HCT116 (cell line): ENCODE measurements at regions of chr11 and their contacts with region 1.

Region 1: DNA sequence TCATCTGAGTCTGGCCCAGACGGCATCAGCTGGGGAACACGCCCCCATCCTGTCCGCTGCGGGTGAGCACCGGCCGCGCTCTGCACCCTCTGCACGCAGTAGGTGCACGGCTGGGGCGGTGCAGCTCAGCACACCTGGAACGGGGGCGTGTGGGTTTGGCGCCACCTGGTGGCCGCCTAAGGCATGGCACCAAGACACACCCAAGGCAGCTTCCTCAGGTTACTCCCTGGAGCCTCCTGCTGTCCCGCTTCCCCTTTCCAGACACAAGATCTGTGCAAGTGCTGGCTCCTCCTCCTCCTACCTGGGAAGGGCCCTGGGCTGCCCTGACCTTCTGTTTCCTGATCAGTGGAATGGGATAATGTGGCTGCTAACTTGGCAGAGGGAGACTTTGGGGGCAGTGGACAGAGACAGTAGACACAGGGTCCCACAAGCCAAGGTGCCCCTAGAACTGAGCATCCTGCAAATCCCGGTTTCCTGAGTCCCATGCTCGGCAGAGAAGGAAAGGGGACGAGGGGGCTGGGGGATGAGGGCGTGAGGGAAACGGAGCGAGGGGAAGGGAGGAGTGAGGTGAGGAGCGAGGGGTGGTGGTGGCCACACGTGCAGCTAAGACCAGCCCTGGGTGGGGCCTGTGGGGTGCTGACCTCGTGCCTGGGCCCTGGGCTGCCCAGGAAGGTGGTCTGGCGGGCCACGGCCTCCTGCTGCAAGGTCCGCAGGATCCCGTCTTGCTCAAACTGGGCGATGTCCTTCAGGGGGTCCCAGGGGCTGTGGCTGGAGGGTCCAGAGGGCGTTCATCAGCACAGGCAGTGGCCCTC is 34.8 kb upstream of the CARS1 start:
- DNase-seq: peak; percentile 67
- ATAC-seq: peak; percentile 94
- H3K4me3 ChIP-seq: no peak overlapping the region
- H3K27ac ChIP-seq: peak overlapping the region; percentile 36; the same call in 1 of the 2 replicates
- H3K4me1 ChIP-seq: peaks cover 2 to 22% of the 10 kb centered on the region in 2 experiments
- H3K27me3 ChIP-seq: no peaks in the 10 kb centered on the region
- CTCF ChIP-seq: peak; percentile 98 to 99 (median 98)
- POLR2A ChIP-seq: no peak
- RAD21 ChIP-seq: peak; percentile 96

Region 2: DNA sequence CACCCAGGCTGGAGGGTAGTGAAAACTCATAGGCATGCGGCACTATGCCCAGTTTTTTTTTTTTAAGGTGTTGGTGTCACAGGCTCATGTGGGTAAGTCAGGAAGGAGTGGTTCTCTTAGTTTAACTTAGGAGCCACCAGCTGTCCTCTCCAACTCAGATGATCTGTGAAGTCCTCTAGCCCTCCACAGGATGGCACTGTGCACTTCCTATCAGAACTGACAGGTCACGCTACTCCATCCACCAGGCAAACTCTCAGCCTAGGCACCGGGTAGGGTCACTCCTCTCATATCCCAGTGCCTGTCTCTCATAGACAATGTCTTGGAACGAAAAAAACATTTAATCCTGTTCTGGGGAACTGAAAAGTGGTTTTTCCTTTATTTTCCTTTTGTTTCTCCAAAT is 116.4 kb before region 1 on chr11:
- CTCF ChIA-PET with region 1: interaction called, 5 read pairs
- POLR2A ChIA-PET with region 1: no interaction called
- RAD21 ChIA-PET with region 1: no interaction called
- intact Hi-C with region 1: loop called (anchors 2 kb)
- DNase-seq: peak; percentile 36
- ATAC-seq: peak; percentile 96
- H3K4me3 ChIP-seq: no peak overlapping the region
- H3K27ac ChIP-seq: no peak overlapping the region
- H3K4me1 ChIP-seq: no peaks in the 10 kb centered on the region
- H3K27me3 ChIP-seq: no peaks in the 10 kb centered on the region
- CTCF ChIP-seq: peak; percentile 55 to 62 (median 59)
- POLR2A ChIP-seq: no peak
- RAD21 ChIP-seq: peak; percentile 51

Region 3: DNA sequence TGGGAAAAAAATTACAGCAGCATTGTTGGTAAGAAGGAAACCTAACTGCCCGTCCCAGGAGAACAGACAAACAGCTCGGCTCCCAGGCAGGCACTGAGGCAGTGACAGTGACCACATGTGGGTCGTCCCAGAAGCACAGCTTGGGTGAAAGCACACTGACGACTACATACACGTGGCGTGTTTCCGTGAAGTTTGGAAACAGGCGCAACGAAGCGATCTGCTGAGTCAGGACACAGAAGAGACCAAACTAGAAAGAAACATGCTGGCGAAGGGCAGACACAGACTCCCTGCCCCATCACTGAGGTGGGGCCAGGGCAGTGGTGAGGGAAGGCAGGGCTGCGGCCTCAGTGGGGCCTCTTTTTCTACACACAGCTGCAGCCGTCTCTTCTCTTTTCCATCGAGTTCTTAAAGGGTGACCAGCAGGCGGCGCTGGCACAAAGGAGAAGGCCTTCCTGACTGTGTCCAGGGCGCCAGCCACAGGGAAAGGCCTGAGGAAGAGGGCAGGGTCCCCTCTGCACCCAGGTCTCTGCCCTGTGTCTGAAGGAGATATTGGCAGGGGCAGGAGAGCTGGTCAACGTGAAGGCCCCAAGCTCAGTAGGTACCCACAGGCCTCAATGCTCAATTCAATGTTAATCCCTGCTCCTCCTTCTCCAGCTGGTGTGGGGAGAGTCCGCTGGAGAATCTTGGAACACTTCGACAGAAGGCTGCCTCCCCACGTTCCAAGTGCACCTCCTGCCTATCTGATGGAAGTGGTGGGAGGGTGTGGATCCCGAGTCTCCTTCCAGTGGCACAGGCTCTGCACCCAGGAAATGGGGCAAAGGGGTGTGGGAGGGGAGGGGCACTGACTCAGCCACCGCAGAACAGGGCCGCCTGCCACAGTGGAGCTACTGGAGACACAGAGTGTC is 54.7 kb before region 1 on chr11:
- CTCF ChIA-PET with region 1: interaction called, 9 read pairs
- POLR2A ChIA-PET with region 1: no interaction called
- RAD21 ChIA-PET with region 1: interaction called, 4 to 14 read pairs
- intact Hi-C with region 1: loop called (anchors 1 kb)
- DNase-seq: peak; percentile 31
- ATAC-seq: peak; percentile 97
- H3K4me3 ChIP-seq: no peak overlapping the region
- H3K27ac ChIP-seq: no peak overlapping the region
- H3K4me1 ChIP-seq: no peaks in the 10 kb centered on the region; a peak in 1 of 4 replicates
- H3K27me3 ChIP-seq: no peaks in the 10 kb centered on the region
- CTCF ChIP-seq: peak; percentile 67 to 91 (median 80)
- POLR2A ChIP-seq: no peak
- RAD21 ChIP-seq: peak; percentile 81

Region 4: GRCh38 chr11:3101921-3102640 is 10.1 kb after region 1 on chr11:
- CTCF ChIA-PET with region 1: no interaction called
- POLR2A ChIA-PET with region 1: no interaction called
- RAD21 ChIA-PET with region 1: no interaction called
- intact Hi-C with region 1: no loop called
- DNase-seq: no peak
- ATAC-seq: no peak
- H3K4me3 ChIP-seq: no peak overlapping the region
- H3K27ac ChIP-seq: no peak overlapping the region
- H3K4me1 ChIP-seq: no peaks in the 10 kb centered on the region
- H3K27me3 ChIP-seq: no peaks in the 10 kb centered on the region
- CTCF ChIP-seq: no peak
- POLR2A ChIP-seq: no peak
- RAD21 ChIP-seq: no peak

Region 5: DNA sequence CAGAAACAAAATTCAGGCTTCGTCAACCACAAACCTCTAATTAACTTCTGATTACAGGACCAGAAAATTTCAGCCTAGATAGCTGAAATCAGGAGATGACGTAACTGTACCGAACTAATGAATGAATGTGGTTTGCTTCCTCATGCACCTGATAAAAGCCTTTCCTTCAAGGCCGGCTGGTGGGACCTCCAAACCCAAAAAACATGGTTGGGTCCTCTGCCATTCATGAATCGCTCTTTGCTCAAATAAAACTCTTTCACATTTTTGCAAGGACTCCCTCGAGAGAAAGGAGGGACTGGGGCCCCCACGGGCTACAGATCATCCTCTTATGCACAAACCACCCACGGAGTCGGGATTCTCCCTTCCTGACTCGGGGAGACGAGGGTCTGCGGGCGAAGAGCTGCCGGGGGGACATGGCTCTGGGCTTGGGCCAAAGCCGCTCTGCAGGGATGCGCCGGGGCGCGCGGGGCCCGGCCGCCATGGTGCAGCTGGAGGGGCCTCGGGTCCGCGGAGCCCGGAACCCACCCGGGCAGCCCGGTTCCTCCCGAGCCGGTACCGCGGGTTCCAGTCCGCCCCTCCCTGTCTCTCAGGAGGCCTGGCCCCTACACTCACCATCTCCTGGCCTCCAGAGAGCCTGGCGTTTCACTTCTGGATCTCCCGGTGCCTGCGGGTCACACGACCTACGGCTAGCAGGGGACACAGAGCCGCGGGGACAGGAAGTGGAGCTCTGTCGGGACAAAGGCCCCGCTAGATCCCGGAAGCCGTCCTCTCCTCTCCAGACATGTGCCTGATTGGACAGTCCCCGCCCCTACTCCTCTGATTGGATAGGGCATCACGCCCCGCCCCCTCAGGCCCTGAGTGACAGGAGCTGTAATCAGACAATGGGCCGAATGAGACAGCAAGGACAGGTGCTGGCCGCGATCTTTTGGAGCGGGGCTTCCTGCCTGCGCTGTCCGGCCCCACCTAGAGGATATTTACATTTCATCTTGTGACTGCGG is 286.7 kb after region 1 on chr11 and contains the start of gene ZNF195:
- CTCF ChIA-PET with region 1: no interaction called
- POLR2A ChIA-PET with region 1: no interaction called
- RAD21 ChIA-PET with region 1: no interaction called
- intact Hi-C with region 1: no loop called
- DNase-seq: peak; percentile 97
- ATAC-seq: peak; percentile 99
- H3K4me3 ChIP-seq: peak within 1 kb of the TSS; percentile 78 to 98
- H3K27ac ChIP-seq: peak within 1 kb of the TSS; percentile 71
- H3K4me1 ChIP-seq: peaks cover 3 to 21% of the 10 kb centered on the region in 2 experiments; a peak in 2 of 4 replicates
- H3K27me3 ChIP-seq: no peaks in the 10 kb centered on the region
- CTCF ChIP-seq: no peak
- POLR2A ChIP-seq: peak; percentile 79
- RAD21 ChIP-seq: no peak
- total RNA-seq, gene ZNF195: 47.7 TPM